GM23248 (cell line): ENCODE measurements at regions of chr4 and their contacts with region 1.

Region 1: GRCh38 chr4:16035843-16036242 is 48.0 kb downstream of the PROM1 start:
- DNase-seq: no peak
- H3K4me3 ChIP-seq: no peak overlapping the region
- H3K27ac ChIP-seq: no peak overlapping the region
- H3K4me1 ChIP-seq: no peaks in the 10 kb centered on the region
- H3K27me3 ChIP-seq: peaks cover 16% of the 10 kb centered on the region

Region 2: DNA sequence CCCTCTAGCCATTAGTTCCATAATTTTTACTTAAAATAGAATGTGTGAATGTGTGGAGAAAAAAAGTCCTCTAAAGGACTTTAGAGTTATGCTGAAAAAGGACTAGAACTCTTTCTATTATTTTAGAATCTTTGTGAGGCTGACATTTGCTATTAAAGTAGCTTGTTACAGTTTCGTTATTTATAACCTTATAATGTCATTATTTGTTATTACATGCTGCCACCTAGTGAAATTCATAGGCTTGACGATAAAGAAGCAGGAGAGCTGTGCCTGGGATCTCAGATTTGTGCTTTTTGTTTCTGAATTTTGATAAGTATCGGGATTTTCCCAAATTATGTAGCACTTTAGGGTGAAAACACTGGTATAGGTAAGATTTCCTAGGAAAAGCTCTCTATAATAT is 229.0 kb after region 1 on chr4:
- in situ Hi-C with region 1: loop called (anchors 5 kb)
- DNase-seq: peak; percentile 73
- H3K4me3 ChIP-seq: no peak overlapping the region
- H3K27ac ChIP-seq: no peak overlapping the region
- H3K4me1 ChIP-seq: peaks cover 8% of the 10 kb centered on the region
- H3K27me3 ChIP-seq: no peaks in the 10 kb centered on the region

Region 3: GRCh38 chr4:16642895-16643294 is 607.1 kb after region 1 on chr4:
- in situ Hi-C with region 1: no loop called
- DNase-seq: no peak
- H3K4me3 ChIP-seq: no peak overlapping the region
- H3K27ac ChIP-seq: no peak overlapping the region
- H3K4me1 ChIP-seq: peaks cover 14% of the 10 kb centered on the region
- H3K27me3 ChIP-seq: no peaks in the 10 kb centered on the region